Dorsolateral prefrontal cortex (tissue), 120 donors: ENCODE measurements at regions of chr9 and their contacts with region 1.

Region 1: GRCh38 chr9:114653556-114654159 is 3.9 kb downstream of the TEX53 start:
- DNase-seq: peak in 8 of 10 donors; percentile 23 to 62 (median 49)
- H3K4me3 ChIP-seq: no peak overlapping the region
- H3K27ac ChIP-seq: peak overlapping the region in 33 of 59 donors; percentile 11 to 92 (median 58)
- H3K27me3 ChIP-seq: no peaks in the 10 kb centered on the region
- CTCF ChIP-seq: peak; percentile 66 to 95 (median 87)

Region 2: DNA sequence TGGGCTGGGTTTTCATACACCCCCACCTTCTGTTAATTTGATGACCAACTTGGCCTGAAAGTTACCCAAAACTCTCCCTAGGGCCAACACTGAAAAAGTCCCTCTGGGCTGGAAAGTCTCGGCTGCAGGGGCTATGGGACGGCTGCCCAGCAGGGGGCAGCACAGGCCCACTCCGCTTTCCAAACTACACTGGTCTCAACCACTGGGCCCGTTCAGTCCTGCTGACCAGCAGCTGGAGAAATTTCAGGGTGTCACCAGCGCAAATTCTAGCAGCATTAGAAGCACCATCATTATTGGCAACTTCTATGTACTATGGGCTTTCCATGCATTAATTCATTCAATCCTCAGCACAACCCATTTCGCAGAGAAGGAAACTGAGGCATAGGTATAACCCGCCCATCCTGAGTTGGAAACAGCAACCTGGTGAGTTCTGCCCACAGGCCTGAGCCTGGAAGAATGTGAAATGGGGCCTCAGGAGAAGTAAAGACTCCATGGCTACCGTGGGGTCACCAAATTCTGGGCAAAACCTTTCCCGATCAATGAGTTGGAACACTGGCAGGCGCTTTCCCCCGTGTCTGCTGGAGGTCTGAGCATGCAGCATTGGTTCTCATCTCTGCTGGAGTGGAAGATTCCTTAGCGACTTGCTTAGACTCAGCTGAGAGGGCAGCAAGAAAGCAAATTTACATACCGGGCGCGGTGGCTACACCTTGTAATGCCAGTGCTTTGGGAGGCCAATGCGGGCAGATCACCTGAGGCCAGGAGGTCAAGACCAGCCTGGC is 314.3 kb before region 1 on chr9:
- intact Hi-C with region 1: loop called in 1 of 2 experiments (anchors 5 kb)
- DNase-seq: peak in 4 of 10 donors; percentile 39 to 72 (median 55)
- H3K4me3 ChIP-seq: no peak overlapping the region
- H3K27ac ChIP-seq: no peak overlapping the region
- H3K27me3 ChIP-seq: no peaks in the 10 kb centered on the region
- CTCF ChIP-seq: peak; percentile 30 to 85 (median 73)

Region 3: GRCh38 chr9:114405294-114406034 is 248.2 kb before region 1 on chr9:
- intact Hi-C with region 1: loop called (anchors 2 to 5 kb)
- DNase-seq: peak; percentile 50 to 89 (median 82)
- H3K4me3 ChIP-seq: no peak overlapping the region
- H3K27ac ChIP-seq: peak overlapping the region in 55 of 59 donors; percentile 7 to 87 (median 67)
- H3K27me3 ChIP-seq: no peaks in the 10 kb centered on the region
- CTCF ChIP-seq: peak; percentile 52 to 93 (median 82)

Region 4: GRCh38 chr9:114434878-114435311 is 218.8 kb before region 1 on chr9:
- intact Hi-C with region 1: loop called in 1 of 2 experiments (anchors 5 kb)
- DNase-seq: peak in 3 of 10 donors; percentile 22 to 33 (median 26)
- H3K4me3 ChIP-seq: peak overlapping the region in 5 of 59 donors; percentile 8 to 11 (median 9)
- H3K27ac ChIP-seq: peak overlapping the region in 26 of 59 donors; percentile 4 to 74 (median 46)
- H3K27me3 ChIP-seq: no peaks in the 10 kb centered on the region
- CTCF ChIP-seq: peak in 55 of 56 donors; percentile 29 to 78 (median 63)

Region 5: GRCh38 chr9:114487607-114488300 is 165.9 kb before region 1 on chr9:
- intact Hi-C with region 1: loop called (anchors 5 to 10 kb)
- DNase-seq: peak in 6 of 10 donors; percentile 14 to 70 (median 59)
- H3K4me3 ChIP-seq: no peak overlapping the region
- H3K27ac ChIP-seq: peak overlapping the region in 18 of 59 donors; percentile 4 to 55 (median 36)
- H3K27me3 ChIP-seq: no peaks in the 10 kb centered on the region
- CTCF ChIP-seq: peak; percentile 61 to 92 (median 85)

Region 6: DNA sequence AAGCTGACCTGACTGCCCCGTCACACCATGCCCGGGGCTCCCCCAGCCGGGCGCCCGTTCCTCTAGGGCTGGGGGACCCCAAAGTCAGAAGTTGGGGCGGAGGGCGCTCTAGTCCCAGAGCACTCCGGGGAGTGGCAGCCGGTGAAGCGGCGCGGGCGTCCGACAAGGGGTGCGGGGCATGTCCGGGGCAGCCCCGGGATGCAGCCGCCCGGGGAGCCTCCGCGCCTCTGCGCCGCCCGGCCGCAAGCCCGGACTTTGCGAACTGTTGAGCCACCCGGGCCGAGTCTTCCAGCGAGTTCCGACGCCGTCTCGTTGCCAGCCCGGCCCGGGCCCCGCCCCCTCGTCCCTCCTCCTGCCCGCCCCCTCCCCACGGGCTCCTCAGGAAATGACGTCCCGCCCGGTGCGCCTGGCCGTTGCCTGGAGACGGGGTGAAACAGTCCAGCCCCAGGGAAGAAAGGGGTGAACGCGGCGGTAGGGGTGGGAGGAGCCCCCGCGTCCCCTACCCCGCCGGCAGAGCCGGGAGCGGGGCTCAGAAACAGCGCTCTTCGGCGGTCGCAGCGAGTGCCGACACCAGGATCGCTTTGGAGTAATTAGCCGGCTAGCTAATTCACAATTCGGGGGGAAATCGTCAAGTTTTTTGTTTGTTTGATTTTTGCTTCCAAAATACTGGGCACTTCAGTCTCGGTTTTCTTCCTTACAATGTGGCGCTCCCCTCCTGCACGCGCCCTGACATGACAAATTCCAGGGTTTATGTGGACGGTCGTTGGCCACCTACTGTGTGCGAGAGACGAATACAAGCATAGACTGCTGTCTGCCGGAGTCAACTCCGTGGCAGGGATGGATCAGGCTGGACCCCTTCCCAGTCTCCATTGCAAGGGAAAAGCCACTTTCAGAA is 148.2 kb before region 1 on chr9 and contains the start of gene WHRN:
- intact Hi-C with region 1: loop called in 1 of 2 experiments (anchors 5 kb)
- DNase-seq: peak; percentile 67 to 94 (median 90)
- H3K4me3 ChIP-seq: peak within 1 kb of the TSS; percentile 43 to 87 (median 73)
- H3K27ac ChIP-seq: peak within 1 kb of the TSS in 56 of 59 donors; percentile 45 to 98 (median 92)
- H3K27me3 ChIP-seq: peaks cover 0 to 26% (median 0%) of the 10 kb centered on the region in 45 donors
- CTCF ChIP-seq: peak in 15 of 56 donors; percentile 4 to 35 (median 15)
- total RNA-seq, gene WHRN: 8.2 to 129 (median 33.9) TPM